Activated naive CD4-positive, alpha-beta T cell treated with anti-CD3 and anti-CD28 coated beads for 36 hours (primary cell): ENCODE measurements at regions of chr22 and their contacts with region 1.

Region 1: DNA sequence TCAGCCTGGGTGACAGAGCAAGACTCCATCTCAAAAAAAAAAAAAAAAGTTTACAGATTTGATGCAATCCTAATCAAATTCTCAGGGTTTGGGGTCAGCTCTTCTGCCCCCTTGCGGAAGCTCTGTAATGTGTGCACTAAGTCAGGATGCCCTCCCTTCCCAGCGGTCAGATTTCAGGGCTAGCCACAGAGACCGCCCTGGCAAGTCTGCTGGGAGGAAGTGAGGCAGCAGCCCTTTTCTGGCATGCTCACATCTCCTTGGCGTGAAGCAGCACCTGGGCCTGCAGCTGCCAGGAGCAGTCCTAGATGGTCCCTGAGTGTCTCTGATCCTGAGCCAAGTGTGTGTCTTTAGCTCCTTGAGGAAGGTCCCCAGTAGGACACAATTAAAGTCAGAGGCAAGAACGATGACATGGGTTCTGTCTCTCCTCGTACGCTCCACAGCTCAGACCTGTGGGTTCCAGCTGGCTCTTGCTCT is 10.9 kb upstream of the APOBEC3C start:
- DNase-seq: peak; percentile 86
- H3K4me3 Mint-ChIP-seq: no peak overlapping the region
- H3K27ac Mint-ChIP-seq: no peak overlapping the region
- H3K4me1 Mint-ChIP-seq: peaks cover 9% of the 10 kb centered on the region
- H3K27me3 Mint-ChIP-seq: no peaks in the 10 kb centered on the region

Region 2: GRCh38 chr22:38766076-38766777 is 237.0 kb before region 1 on chr22:
- CTCF ChIA-PET with region 1: interaction called, 13 read pairs
- intact Hi-C with region 1: loop called (anchors 5 kb)
- DNase-seq: peak; percentile 58
- H3K4me3 Mint-ChIP-seq: no peak overlapping the region
- H3K27ac Mint-ChIP-seq: no peak overlapping the region
- H3K4me1 Mint-ChIP-seq: peaks cover 5% of the 10 kb centered on the region
- H3K27me3 Mint-ChIP-seq: no peaks in the 10 kb centered on the region

Region 3: DNA sequence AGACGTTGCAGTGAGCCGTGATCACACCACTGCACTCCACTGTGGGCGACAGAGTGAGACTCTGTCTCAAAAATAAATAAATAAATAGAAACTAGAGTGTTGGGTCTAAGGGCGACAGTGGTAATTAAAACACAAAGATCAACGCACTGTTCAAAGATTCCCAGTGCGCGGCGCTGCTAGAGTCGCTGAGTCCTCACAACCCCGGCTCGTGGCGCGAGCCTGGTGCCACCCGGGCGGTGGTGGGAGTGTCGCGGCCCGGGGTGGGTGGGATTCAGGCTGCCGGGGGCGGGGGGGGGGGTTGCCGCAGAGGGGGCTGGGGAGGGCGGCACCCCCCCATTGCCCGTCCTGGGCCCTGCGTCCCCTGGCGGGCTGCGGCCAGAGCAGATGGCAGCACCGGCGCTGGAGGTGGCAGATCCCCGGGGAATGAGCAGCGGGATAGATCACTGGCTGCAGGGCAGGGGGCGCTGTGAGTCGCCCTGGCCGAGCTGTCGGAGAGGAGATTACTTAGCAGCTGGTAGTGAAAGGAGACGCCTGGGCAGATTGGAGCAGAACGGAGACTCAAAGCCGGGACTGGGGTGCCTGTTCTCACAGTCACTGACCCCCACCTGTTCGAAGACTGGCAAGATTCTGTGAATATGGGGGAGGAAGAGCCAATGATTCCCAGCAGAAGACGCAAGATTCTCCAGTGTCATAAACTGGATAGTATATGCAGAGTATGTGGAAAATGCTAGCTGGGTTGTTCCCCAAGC is 76.0 kb before region 1 on chr22:
- CTCF ChIA-PET with region 1: interaction called, 7 read pairs
- intact Hi-C with region 1: loop called (anchors 5 kb)
- DNase-seq: peak; percentile 73
- H3K4me3 Mint-ChIP-seq: peak overlapping the region; percentile 51
- H3K27ac Mint-ChIP-seq: no peak overlapping the region
- H3K4me1 Mint-ChIP-seq: peaks cover 4% of the 10 kb centered on the region
- H3K27me3 Mint-ChIP-seq: peaks cover 33% of the 10 kb centered on the region

Region 4: DNA sequence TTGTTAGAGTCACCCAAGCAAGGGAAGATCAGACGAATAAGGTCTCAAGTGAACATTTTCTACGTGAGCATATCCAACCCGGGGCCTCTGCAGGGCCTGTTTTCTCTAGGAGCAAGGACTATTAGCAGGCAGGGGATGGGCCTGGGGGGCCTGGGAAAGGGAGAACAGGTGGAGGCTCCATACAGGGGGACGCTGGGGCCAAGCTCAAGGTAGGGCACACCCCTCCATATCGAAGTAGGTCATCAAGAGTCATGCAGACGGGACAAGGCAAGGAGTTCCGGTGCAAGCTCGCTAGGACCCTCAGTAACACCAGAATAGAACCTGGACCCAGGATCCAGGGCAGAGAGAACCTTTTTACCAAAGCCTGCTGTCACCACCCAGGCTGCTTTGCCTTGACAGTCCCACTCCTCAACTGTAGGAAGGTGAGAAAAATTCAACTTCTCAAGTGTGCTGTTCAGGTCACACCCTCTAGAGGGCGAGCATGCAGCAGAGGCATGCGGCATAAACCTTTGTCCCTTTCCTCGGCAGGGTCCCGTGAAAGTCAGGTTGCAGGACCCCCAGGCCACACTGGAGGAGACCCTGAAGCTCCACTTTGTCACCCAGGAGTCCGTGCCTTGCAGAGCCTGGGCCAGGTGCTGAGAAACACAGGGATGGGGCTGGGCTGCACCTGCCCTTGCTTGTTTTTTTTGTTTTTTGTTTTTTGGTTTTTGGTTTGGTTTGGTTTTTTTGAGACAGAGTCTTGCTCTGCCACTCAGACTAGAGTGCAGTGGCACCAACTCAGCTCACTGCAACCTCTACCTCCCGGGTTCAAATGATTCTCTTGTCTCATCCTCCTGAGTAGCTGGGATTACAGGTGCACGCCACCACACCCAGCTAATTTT is 29.7 kb before region 1 on chr22:
- CTCF ChIA-PET with region 1: interaction called, 64 read pairs
- intact Hi-C with region 1: loop called (anchors 1 kb)
- DNase-seq: peak; percentile 77
- H3K4me3 Mint-ChIP-seq: no peak overlapping the region
- H3K27ac Mint-ChIP-seq: no peak overlapping the region
- H3K4me1 Mint-ChIP-seq: peaks cover 4% of the 10 kb centered on the region
- H3K27me3 Mint-ChIP-seq: peaks cover 2% of the 10 kb centered on the region

Region 5: GRCh38 chr22:39013942-39014722 is 10.9 kb after region 1 on chr22 and contains the start of gene APOBEC3C:
- CTCF ChIA-PET with region 1: no interaction called
- intact Hi-C with region 1: no loop called
- DNase-seq: peak; percentile 93
- H3K4me3 Mint-ChIP-seq: peak within 1 kb of the TSS; percentile 89
- H3K27ac Mint-ChIP-seq: peak within 1 kb of the TSS; percentile 95
- H3K4me1 Mint-ChIP-seq: peaks cover 34% of the 10 kb centered on the region
- H3K27me3 Mint-ChIP-seq: no peaks in the 10 kb centered on the region
- total RNA-seq, gene APOBEC3C: 71.5 to 74.1 TPM

Region 6: DNA sequence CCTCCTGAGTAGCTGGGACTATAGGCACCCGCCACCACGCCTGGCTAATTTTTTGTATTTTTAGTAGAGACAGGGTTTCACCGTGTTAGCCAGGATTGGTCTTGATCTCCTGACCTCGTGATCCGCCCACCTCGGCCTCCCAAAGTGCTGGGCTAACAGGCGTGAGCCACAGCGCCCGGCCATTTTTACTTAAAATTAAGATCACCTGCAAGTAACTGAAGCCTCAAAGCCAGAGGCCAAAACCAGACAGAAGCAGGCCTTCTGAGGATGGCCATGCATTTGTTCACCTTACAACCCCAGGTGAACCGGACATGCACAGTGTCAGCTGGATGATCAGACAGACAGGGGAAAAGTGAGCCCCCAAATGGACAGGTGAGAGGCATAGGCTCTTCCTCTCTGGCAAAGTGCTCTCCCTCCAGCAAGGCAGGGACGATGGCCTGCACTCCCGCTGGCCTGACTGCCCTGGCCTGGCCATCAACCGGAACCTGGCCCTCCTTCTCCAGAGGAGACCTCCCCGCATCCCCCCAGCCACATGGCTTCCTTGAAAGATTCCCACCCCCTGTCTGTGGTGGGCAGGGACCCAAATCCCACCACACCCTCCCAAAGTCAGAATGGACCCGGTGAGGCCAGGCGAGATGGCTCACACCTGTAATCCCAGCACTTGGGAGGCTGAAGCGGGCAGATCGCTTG is 119.7 kb after region 1 on chr22:
- CTCF ChIA-PET with region 1: interaction called, 8 read pairs
- intact Hi-C with region 1: loop called (anchors 1 kb)
- DNase-seq: no peak
- H3K4me3 Mint-ChIP-seq: no peak overlapping the region
- H3K27ac Mint-ChIP-seq: no peak overlapping the region
- H3K4me1 Mint-ChIP-seq: peaks cover 7% of the 10 kb centered on the region
- H3K27me3 Mint-ChIP-seq: no peaks in the 10 kb centered on the region